ENCODE measurements at regions of chr10 and their contacts with region 1.

Region 1: GRCh38 chr10:23314835-23315239 is 29.8 kb downstream of the C10orf67 start:
- DNase-seq: peak; percentile 64
- ATAC-seq: no peak
- H3K4me3 ChIP-seq: no peak overlapping the region
- H3K27ac ChIP-seq: no peak overlapping the region
- H3K4me1 ChIP-seq: no peaks in the 10 kb centered on the region
- H3K27me3 ChIP-seq: no peaks in the 10 kb centered on the region; a peak in 2 of 5 replicates
- CTCF ChIP-seq: peak; percentile 65
- EP300 ChIP-seq: no peak
- POLR2A ChIP-seq: no peak
- RAD21 ChIP-seq: peak; percentile 55

Region 2: GRCh38 chr10:23338178-23338828 is 23.5 kb after region 1 on chr10:
- CTCF ChIA-PET with region 1: no interaction called
- POLR2A ChIA-PET with region 1: no interaction called
- in situ Hi-C with region 1: no loop called
- intact Hi-C with region 1: loop called (anchors 2 kb)
- DNase-seq: peak; percentile 60
- ATAC-seq: peak; percentile 99
- H3K4me3 ChIP-seq: no peak overlapping the region
- H3K27ac ChIP-seq: no peak overlapping the region
- H3K4me1 ChIP-seq: peaks cover 9% of the 10 kb centered on the region; the same call in 1 of the 2 replicates
- H3K27me3 ChIP-seq: peaks cover 0 to 6% of the 10 kb centered on the region in 2 experiments; a peak in 1 of 5 replicates
- CTCF ChIP-seq: peak; percentile 71
- EP300 ChIP-seq: no peak
- POLR2A ChIP-seq: no peak
- RAD21 ChIP-seq: peak; percentile 31; the same call in 1 of the 2 replicates

Region 3: DNA sequence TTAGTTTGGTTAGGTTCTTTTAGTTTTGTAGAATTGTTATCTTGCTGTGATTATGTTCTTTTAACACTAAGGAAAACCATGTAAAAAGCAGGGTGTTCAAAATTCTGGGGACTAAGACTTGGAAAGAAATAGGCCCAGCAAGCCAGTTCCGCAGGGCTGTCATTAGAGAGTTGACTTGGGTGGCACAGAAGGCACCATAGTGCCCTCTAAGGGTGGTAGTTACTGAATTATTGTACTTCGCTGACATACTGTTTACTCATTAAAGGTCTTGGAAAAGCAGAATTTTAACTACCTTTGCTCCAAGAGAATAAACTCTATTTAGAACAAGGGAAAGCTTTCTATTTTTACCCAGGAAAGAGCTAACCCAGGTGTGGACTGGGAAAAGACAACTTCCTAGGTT is 210.6 kb after region 1 on chr10:
- CTCF ChIA-PET with region 1: interaction called, 17 read pairs
- POLR2A ChIA-PET with region 1: no interaction called
- in situ Hi-C with region 1: loop called (anchors 5 kb)
- intact Hi-C with region 1: loop called (anchors 1 kb)
- DNase-seq: peak; percentile 4
- ATAC-seq: peak; percentile 41; the same call in 1 of the 3 replicates
- H3K4me3 ChIP-seq: no peak overlapping the region
- H3K27ac ChIP-seq: no peak overlapping the region
- H3K4me1 ChIP-seq: no peaks in the 10 kb centered on the region
- H3K27me3 ChIP-seq: no peaks in the 10 kb centered on the region; a peak in 1 of 5 replicates
- CTCF ChIP-seq: peak; percentile 43
- EP300 ChIP-seq: no peak
- POLR2A ChIP-seq: no peak
- RAD21 ChIP-seq: no peak

Region 4: DNA sequence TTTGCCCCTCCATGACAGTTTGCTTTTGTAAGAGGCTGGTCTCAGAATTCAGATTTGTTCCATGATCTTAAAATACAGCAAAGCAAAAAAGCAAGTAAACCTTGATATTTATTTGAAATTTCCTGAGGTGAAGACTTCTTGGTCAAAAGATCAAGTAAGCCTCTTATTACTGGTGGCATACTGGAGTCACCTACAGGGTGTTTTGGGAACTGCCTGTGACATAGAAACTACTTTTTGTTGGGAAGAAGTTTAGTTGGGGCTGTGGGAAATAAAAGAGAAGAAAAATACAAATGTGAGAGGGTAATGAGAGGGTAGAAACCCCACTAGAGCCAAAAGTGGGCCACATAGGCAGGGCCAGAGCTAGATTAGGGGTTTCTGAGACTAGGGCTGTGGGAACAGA is 341.9 kb after region 1 on chr10:
- CTCF ChIA-PET with region 1: interaction called, 8 read pairs
- POLR2A ChIA-PET with region 1: no interaction called
- in situ Hi-C with region 1: no loop called
- intact Hi-C with region 1: loop called (anchors 1 kb)
- DNase-seq: no peak
- ATAC-seq: no peak
- H3K4me3 ChIP-seq: no peak overlapping the region
- H3K27ac ChIP-seq: no peak overlapping the region
- H3K4me1 ChIP-seq: no peaks in the 10 kb centered on the region
- H3K27me3 ChIP-seq: no peaks in the 10 kb centered on the region; a peak in 2 of 5 replicates
- CTCF ChIP-seq: peak; percentile 25
- EP300 ChIP-seq: no peak
- POLR2A ChIP-seq: no peak
- RAD21 ChIP-seq: no peak

Region 5: DNA sequence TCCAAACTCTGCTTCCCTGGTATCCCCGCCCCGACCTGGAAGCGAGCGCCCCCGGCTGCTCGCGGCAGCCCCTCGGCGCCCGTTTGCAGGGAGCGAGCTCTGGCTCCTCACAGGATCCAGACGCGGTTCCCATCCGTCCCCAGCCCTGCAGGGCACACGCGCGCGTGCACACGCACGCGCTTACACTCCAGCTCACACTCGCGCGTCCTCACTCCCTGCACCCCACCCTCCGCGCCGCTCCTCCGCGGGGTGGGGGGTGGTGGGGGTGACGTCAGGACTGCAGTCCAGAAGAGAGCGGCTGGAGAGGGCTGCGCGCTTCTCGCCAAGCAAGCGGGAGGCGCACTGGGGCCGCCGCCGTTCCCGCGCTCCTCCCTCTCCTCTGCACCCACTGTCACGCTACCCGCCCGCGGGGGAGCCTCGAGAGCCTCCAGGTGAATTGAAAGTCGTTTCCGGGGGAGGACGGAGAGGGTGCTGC is 379.6 kb after region 1 on chr10:
- CTCF ChIA-PET with region 1: no interaction called
- POLR2A ChIA-PET with region 1: no interaction called
- in situ Hi-C with region 1: loop called (anchors 10 kb)
- intact Hi-C with region 1: no loop called
- DNase-seq: no peak
- ATAC-seq: no peak; the same call in 2 of the 3 replicates
- H3K4me3 ChIP-seq: no peak overlapping the region
- H3K27ac ChIP-seq: no peak overlapping the region
- H3K4me1 ChIP-seq: no peaks in the 10 kb centered on the region
- H3K27me3 ChIP-seq: peaks cover 4 to 28% of the 10 kb centered on the region in 2 experiments; a peak in 3 of 5 replicates
- CTCF ChIP-seq: no peak
- EP300 ChIP-seq: no peak
- POLR2A ChIP-seq: no peak
- RAD21 ChIP-seq: no peak

Region 6: GRCh38 chr10:23702977-23703414 is 388.2 kb after region 1 on chr10:
- CTCF ChIA-PET with region 1: interaction called, 17 read pairs
- POLR2A ChIA-PET with region 1: no interaction called
- in situ Hi-C with region 1: loop called (anchors 10 kb)
- intact Hi-C with region 1: loop called (anchors 1 kb)
- DNase-seq: peak; percentile 58
- ATAC-seq: peak; percentile 98
- H3K4me3 ChIP-seq: no peak overlapping the region
- H3K27ac ChIP-seq: no peak overlapping the region
- H3K4me1 ChIP-seq: no peaks in the 10 kb centered on the region
- H3K27me3 ChIP-seq: no peaks in the 10 kb centered on the region
- CTCF ChIP-seq: peak; percentile 82
- EP300 ChIP-seq: no peak
- POLR2A ChIP-seq: no peak
- RAD21 ChIP-seq: 0 out of 2 replicates have a peak, but pooled peaks have one; percentile 53